IMR-90 (cell line): ENCODE measurements at regions of chr9 and their contacts with region 1.

Region 1: DNA sequence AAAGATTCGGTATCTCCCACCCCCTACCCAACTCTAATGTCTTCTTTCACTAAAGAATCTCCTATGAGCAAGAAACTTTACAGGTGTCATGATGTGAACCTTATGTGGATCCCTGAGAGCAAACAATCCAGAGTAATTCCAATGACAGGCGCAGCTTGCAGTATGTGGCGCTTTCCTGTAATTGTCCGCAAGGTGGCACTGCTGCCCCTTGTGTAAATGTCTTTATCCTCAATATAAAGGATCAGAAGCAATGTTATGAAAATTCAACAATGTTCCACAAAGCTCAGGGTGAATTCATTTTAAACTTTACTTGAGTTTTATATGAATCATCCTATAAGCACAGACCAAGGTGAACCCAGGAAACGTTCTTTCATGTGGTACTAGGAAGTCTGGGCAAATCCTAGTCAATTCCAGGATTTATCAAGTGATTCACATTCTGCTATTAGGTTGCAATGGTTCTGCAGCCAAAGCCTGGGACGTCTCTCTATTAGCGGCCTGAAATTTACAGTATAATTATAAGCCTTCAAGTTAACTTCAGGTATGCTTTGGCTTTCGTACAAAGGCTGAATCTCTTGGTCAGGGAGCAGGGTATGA is 113.7 kb downstream of the TRPM6 start:
- DNase-seq: peak; percentile 73
- ATAC-seq: peak; percentile 83
- H3K4me3 ChIP-seq: no peak overlapping the region
- H3K27ac ChIP-seq: no peak overlapping the region
- H3K4me1 ChIP-seq: no peaks in the 10 kb centered on the region
- H3K27me3 ChIP-seq: no peaks in the 10 kb centered on the region
- CTCF ChIP-seq: peak; percentile 89
- POLR2A ChIP-seq: no peak
- RAD21 ChIP-seq: peak; percentile 82

Region 2: DNA sequence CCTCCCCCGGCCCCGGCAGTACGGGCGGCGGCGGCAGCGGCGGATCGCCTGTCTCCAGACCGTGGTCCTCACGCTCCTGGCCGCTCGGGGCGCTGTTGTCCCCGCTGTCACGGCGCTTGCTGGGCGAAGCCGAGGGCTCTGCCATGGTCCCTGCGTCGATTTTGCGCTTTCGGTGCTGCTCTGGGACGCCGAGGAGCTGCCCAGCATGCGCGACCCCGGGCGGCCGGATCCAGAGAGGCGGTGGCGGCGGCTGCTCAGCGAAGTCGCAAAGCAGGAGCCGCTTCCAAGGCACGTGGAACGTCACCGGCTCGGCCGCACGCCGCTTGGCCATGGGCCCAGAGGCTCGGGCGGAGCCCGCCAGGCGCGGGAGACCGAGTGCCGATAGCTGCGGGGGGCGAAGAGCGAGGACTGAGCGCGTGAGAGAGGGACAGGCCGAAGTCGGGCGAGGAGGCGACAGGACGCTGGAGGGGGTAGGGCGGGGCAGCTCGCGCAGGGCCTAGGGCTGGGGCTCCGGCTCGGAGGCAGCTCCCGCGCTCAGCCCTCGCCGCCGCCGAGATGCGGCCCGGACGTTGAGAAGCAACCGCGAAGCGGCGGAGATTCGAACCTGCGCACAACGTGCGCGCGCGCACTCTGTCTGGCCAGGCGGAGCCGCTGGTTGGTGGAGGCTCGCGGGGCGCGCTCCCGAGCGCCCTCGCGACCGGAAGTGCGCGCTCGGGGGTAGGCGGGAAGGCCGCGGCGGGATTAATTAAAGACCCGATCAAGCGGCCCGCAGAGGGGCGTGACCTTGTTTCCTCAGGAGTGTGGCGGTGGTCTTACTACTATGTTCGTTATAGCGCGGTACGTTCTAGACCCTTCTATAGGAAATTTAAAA is 178.5 kb after region 1 on chr9 and contains the start of gene C9orf40:
- CTCF ChIA-PET with region 1: interaction called, 3 read pairs
- POLR2A ChIA-PET with region 1: interaction called, 3 read pairs
- dilution Hi-C with region 1: no loop called
- in situ Hi-C with region 1: no loop called
- intact Hi-C with region 1: loop called (anchors 2 kb)
- DNase-seq: peak; percentile 80
- ATAC-seq: peak; percentile 96
- H3K4me3 ChIP-seq: peak within 1 kb of the TSS; percentile 100
- H3K27ac ChIP-seq: peak within 1 kb of the TSS; percentile 82
- H3K4me1 ChIP-seq: no peaks in the 10 kb centered on the region
- H3K27me3 ChIP-seq: no peaks in the 10 kb centered on the region
- CTCF ChIP-seq: peak; percentile 81
- POLR2A ChIP-seq: no peak
- RAD21 ChIP-seq: peak; percentile 41
- total RNA-seq, gene C9orf40: 0.36 and 1.7 TPM in 2 replicates

Region 3: DNA sequence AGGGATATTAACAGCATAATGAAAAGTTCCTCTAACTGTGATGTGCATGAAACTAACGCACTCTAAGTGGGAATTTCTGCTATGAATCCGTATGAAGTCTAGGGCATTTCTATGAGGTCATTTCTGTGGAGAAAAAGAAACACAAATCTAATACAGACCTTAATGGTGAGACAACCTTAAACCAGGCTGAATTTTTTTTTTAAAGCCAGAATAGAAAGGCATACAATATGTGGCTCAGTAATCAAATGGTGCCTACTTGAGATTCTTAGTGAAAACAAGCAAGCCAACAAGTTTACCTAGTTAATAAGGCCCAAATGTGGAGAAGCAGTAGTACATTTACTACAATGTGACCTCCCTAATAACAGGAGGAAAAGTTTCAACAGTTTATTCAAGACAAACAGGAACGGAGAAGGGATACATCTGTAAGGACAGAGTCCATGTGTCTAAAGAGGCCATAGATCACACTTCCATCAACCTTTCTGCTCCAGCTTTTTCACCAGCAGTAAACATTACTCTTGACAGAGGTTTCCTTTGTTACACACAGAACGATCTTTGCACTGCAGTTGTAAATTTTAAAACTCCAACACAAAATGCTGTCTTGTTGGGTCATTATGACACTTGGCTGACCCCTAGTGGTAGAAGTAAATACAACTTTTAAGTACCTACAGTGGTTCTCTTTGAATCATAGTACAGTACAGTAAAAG is 227.9 kb after region 1 on chr9:
- CTCF ChIA-PET with region 1: interaction called, 4 read pairs
- POLR2A ChIA-PET with region 1: no interaction called
- dilution Hi-C with region 1: no loop called
- in situ Hi-C with region 1: loop called (anchors 5 kb)
- intact Hi-C with region 1: loop called (anchors 1 kb)
- DNase-seq: peak; percentile 91
- ATAC-seq: peak; percentile 98
- H3K4me3 ChIP-seq: no peak overlapping the region
- H3K27ac ChIP-seq: no peak overlapping the region
- H3K4me1 ChIP-seq: 0 out of 2 replicates have a peak, but pooled peaks cover 2% of the 10 kb centered on the region
- H3K27me3 ChIP-seq: no peaks in the 10 kb centered on the region
- CTCF ChIP-seq: peak; percentile 81
- POLR2A ChIP-seq: no peak
- RAD21 ChIP-seq: peak; percentile 78

Region 4: DNA sequence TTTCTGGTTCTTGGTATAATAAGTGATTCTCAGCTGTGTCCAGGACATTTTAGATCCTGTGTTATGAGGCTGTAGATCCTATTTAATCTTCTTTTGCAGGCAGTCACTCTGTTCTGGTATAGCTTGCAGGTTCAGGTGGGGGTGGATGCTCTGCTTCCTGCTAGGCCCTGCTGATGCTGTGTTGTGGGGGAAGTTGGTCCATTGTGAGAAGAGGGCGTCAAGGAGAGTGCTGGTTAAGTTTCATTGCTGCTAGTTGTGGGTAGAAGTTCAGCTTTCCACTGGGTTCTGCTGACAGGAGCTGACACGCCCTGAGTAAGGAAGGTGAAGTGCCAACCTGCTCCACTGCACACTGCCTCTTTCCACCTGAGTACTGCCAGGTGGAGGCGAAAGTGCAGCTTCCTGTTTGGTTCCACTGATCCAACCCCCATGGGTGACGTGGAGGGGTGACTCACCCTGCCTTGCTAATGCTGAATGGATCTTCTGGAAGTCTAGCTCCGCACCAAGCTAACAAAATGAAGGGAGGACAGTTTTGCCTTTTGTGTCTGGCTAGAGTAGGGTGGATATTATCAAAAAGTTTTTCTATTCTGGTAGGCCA is 297.6 kb after region 1 on chr9:
- CTCF ChIA-PET with region 1: interaction called, 3 read pairs
- POLR2A ChIA-PET with region 1: no interaction called
- dilution Hi-C with region 1: no loop called
- in situ Hi-C with region 1: loop called (anchors 5 kb)
- intact Hi-C with region 1: no loop called
- DNase-seq: no peak
- ATAC-seq: no peak
- H3K4me3 ChIP-seq: no peak overlapping the region
- H3K27ac ChIP-seq: no peak overlapping the region
- H3K4me1 ChIP-seq: no peaks in the 10 kb centered on the region
- H3K27me3 ChIP-seq: no peaks in the 10 kb centered on the region
- CTCF ChIP-seq: no peak
- POLR2A ChIP-seq: no peak
- RAD21 ChIP-seq: no peak

Region 5: GRCh38 chr9:75238311-75238978 is 464.5 kb after region 1 on chr9:
- CTCF ChIA-PET with region 1: no interaction called
- POLR2A ChIA-PET with region 1: no interaction called
- dilution Hi-C with region 1: no loop called
- in situ Hi-C with region 1: no loop called
- intact Hi-C with region 1: loop called (anchors 1 kb)
- DNase-seq: peak; percentile 68
- ATAC-seq: peak; percentile 99
- H3K4me3 ChIP-seq: no peak overlapping the region
- H3K27ac ChIP-seq: no peak overlapping the region
- H3K4me1 ChIP-seq: no peaks in the 10 kb centered on the region
- H3K27me3 ChIP-seq: no peaks in the 10 kb centered on the region
- CTCF ChIP-seq: peak; percentile 57
- POLR2A ChIP-seq: no peak
- RAD21 ChIP-seq: peak; percentile 51